Ascending aorta (tissue), 2 donors: ENCODE measurements at regions of chr17 and their contacts with region 1.

Region 1: DNA sequence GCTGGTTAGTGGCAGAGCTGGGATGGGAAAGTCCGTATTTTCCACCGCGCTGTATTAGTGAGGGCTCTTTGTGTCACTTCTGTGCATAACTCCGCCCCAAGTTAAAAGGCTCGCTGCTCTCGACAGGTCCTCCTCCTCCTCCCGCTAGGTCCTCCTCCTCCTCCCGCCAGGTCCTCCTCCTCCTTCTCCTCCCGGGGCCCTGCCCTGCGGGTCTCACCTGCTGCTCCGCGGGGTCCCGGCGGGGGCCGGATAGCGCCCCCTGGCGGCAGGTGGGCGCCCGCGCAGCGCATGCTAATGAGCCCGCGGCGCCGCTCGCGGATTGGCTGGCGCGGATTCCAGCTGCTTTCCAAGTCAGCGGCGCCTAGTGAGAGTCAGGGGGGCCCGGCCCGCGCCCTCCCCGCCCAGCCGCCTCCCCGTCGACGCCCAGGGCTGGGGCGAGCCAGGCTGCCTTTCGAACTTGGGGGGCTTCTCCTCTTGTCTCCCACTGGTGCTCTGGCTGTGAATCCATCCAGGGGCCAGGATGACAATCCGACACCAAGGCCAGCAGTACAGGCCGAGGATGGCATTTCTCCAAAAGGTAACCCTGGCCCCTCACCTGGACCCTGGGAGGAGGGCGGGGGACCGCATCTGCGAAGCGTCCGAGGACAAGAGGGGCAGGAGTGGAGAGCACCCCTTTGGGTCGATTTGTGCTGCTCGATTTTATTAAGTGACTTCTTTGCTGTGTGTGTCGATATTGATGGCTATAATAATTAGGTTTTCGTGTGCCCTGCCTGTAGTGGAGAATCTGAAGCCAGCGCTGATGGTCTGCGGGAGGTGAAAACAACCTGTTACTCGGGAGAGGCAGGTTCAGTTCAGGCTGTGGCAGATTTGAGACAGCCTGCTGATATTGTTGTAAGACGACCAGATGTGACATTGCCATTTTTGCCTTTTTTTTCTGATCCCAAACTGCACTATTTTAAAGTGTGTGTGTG is at the start of gene RGS9:
- DNase-seq: peak; percentile 48 to 92
- H3K4me3 ChIP-seq: peak within 1 kb of the TSS; percentile 56 to 65
- H3K27ac ChIP-seq: peak within 1 kb of the TSS in 1 of 2 donors; percentile 13
- H3K4me1 ChIP-seq: peaks cover 5 to 7% of the 10 kb centered on the region in 2 donors
- H3K27me3 ChIP-seq: no peaks in the 10 kb centered on the region
- CTCF ChIP-seq: peak; percentile 97 to 100 (median 98)
- total RNA-seq, gene RGS9: 0.21 TPM

Region 2: DNA sequence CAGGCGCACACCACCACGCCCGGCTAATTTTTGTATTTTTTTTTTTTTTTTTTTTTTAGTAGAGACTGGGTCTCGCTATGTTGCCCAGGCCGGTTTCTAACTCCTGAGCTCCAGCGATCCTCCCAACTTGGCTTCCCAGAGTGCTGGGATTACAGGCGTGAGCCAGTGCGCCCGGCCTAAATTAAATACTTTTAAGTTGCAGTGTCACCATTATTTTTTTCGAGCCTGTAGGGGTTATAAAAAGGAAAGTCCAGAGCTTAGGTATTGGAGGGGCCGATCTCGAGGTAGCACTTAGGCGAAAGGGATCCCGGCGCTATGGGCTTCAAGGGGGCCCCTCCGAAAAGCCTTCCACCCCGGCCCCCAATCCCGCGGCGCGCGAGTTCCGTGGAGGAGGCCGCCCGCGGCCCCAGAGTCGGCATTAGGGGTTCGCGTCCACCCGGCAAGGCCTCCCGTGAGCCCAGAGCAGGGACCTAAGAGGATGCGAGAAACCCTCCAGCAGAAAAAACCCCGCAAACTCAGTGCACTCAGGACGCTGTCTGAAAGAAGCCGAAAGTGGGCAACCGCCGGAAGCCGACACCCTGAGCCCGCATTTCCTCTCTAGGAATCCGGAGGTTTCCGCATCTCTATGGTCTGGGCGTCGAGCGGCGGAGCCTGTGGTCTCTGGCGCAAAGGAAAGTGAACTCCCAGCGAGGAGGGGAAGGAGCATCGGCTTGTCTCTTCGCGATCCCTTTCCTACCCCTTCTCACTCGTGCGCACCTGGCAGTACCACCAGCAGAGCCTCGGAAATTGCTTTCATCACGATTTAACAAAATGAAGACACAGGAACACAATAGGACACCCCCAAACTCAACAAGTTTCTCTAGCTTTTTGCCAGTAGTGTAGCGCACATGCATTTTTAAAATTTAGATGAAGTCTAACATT is 14.2 kb before region 1 on chr17:
- intact Hi-C with region 1: loop called (anchors 2 kb)
- DNase-seq: peak; percentile 55 to 88
- H3K4me3 ChIP-seq: peak overlapping the region; percentile 69 to 70
- H3K27ac ChIP-seq: peak overlapping the region; percentile 86 to 89
- H3K4me1 ChIP-seq: peaks cover 0 to 6% of the 10 kb centered on the region in 2 donors
- H3K27me3 ChIP-seq: no peaks in the 10 kb centered on the region
- CTCF ChIP-seq: no peak

Region 3: DNA sequence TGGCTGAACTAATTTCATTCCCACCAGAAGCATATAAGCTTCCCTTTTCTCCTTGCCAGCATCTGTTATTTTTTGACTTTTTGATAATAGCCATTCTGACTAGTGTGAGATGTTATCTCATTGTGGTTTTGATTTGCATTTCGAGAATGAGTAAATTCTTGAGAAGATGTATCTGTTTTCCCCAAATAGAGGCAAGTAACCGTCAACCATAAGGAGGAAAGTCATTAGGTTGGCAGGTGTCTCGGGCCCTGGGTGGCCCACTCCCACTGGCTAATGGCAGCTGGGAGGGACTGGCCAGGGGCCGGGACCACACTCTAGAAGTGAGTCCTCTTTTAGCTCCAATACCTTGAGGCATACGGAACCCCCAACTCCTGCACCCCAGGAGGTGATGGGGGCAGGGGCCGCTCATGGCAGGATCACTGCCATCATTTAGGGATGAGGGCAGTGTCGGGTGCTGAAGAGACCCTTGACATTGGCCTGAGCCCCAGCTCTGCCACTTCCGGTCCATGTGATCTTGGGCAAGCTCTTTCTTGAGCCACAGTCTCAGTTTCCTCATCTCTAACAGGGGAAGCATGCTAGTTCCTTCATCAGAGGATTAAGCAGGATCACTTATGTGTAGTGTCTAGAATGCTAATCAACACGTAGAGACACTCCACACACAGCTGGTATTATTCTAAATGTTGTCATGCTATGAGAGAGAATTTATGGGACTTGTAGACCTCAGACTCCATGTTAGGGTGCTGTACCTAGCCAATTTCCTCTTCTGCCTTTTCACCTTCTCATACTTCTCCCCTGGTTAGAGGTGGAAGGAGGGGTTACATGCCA is 44.1 kb after region 1 on chr17:
- intact Hi-C with region 1: no loop called
- DNase-seq: no peak
- H3K4me3 ChIP-seq: no peak overlapping the region
- H3K27ac ChIP-seq: no peak overlapping the region
- H3K4me1 ChIP-seq: no peaks in the 10 kb centered on the region
- H3K27me3 ChIP-seq: no peaks in the 10 kb centered on the region
- CTCF ChIP-seq: no peak

Region 4: DNA sequence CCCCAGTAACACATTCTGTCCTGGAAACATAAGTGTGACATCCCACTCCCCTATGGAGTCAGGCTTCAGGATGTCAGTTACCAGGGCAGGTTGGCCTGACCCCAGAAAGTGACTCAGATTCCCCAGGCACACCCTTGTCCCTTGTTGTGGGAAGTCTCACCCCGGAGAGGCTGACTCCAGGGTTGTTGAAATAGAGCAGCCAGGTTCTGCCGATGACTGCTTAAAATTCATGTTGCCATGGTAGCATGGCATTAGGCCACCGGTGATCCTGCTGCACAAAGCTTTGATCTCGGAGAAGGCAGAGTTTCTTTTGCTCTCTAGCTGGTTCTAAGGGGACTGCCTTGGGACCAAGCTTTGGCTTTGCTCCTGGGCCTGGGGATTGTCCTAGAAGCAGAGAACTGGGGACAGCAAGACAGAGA is 106.5 kb after region 1 on chr17:
- intact Hi-C with region 1: no loop called
- DNase-seq: peak in 1 of 2 donors; percentile 70
- H3K4me3 ChIP-seq: no peak overlapping the region
- H3K27ac ChIP-seq: no peak overlapping the region
- H3K4me1 ChIP-seq: no peaks in the 10 kb centered on the region
- H3K27me3 ChIP-seq: no peaks in the 10 kb centered on the region
- CTCF ChIP-seq: no peak

Region 5: DNA sequence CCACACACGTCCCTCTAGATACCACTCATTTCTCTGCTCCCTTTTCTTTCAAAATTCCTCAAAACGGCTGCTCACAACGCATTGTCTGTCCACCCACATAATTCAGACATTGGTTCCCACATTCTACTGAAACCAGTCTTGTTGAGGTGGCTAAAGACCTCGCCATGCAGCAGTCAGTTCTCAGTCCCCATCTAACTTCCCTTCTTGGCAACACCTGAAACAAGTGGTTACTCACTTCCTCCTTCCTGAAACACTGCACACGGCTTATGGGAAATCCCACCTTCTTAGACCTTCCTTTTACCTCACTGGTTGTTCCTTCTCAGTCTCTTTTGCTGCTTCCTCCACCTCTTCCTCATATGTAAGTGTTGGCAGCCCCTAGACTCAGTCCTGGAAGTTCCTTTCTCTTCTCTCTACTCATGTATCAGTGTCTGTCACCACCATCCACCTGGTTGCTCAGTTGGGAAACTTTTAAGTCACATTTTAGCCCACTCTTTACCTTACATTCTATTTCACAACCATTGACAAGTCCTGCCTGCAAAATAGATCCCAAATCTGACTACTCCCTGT is 777.6 kb after region 1 on chr17:
- intact Hi-C with region 1: no loop called
- DNase-seq: no peak
- H3K4me3 ChIP-seq: no peak overlapping the region
- H3K27ac ChIP-seq: no peak overlapping the region
- H3K4me1 ChIP-seq: peaks cover 0 to 9% of the 10 kb centered on the region in 2 donors
- H3K27me3 ChIP-seq: no peaks in the 10 kb centered on the region
- CTCF ChIP-seq: no peak